ENCODE measurements at regions of chr18 and their contacts with region 1.

Region 1: GRCh38 chr18:34661464-34662111 is 48.5 kb upstream of the DTNA start:
- DNase-seq: no peak
- H3K4me3 ChIP-seq: no peak overlapping the region
- CTCF ChIP-seq: peak; percentile 74

Region 2: GRCh38 chr18:34467058-34467457 is 194.5 kb before region 1 on chr18:
- CTCF ChIA-PET with region 1: no interaction called
- POLR2A ChIA-PET with region 1: no interaction called
- DNase-seq: no peak
- H3K4me3 ChIP-seq: no peak overlapping the region
- CTCF ChIP-seq: no peak

Region 3: GRCh38 chr18:34631560-34631959 is 30.0 kb before region 1 on chr18:
- CTCF ChIA-PET with region 1: interaction called, 17 read pairs
- POLR2A ChIA-PET with region 1: no interaction called
- DNase-seq: no peak
- H3K4me3 ChIP-seq: no peak overlapping the region
- CTCF ChIP-seq: no peak

Region 4: GRCh38 chr18:34676816-34677574 is 15.4 kb after region 1 on chr18:
- CTCF ChIA-PET with region 1: interaction called, 127 read pairs
- POLR2A ChIA-PET with region 1: no interaction called
- DNase-seq: no peak
- H3K4me3 ChIP-seq: no peak overlapping the region
- CTCF ChIP-seq: no peak

Region 5: GRCh38 chr18:34723143-34723542 is 61.6 kb after region 1 on chr18:
- CTCF ChIA-PET with region 1: interaction called, 13 read pairs
- POLR2A ChIA-PET with region 1: no interaction called
- DNase-seq: no peak
- H3K4me3 ChIP-seq: no peak overlapping the region
- CTCF ChIP-seq: no peak

Region 6: GRCh38 chr18:34767601-34768027 is 106.0 kb after region 1 on chr18:
- CTCF ChIA-PET with region 1: interaction called, 39 read pairs
- POLR2A ChIA-PET with region 1: no interaction called
- DNase-seq: peak; percentile 96
- H3K4me3 ChIP-seq: no peak overlapping the region
- CTCF ChIP-seq: no peak

Region 7: GRCh38 chr18:34787931-34788532 is 126.4 kb after region 1 on chr18:
- CTCF ChIA-PET with region 1: interaction called, 251 read pairs
- POLR2A ChIA-PET with region 1: no interaction called
- DNase-seq: peak; percentile 19
- H3K4me3 ChIP-seq: no peak overlapping the region
- CTCF ChIP-seq: peak; percentile 52

Region 8: DNA sequence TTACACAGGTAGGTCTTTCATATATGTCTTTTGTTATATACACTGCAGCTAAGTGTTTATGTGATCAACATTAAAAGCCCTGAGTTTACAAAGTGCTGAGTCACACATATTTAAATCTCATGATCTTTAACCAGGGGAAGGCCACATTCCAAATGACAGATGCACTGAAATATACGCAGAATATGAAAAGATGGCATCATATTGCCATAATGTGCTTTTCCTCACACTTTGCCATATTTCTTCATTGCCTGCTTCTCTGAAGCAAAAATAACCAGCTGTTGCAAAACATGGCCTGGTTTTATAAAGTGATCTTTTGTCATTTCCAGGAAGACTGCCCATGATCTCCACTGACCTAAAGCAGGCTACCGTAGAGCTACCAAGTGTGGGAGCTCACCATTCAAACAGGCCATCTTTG is 286.1 kb after region 1 on chr18:
- CTCF ChIA-PET with region 1: no interaction called
- POLR2A ChIA-PET with region 1: no interaction called
- DNase-seq: no peak
- H3K4me3 ChIP-seq: no peak overlapping the region
- CTCF ChIP-seq: no peak

Measured in AG04449 (cell line).